MCF 10A (cell line): ENCODE measurements at regions of chr17 and their contacts with region 1.

Region 1: GRCh38 chr17:75779231-75779986 is 5.2 kb upstream of the UNK start:
- DNase-seq: peak; percentile 100
- H3K4me3 Mint-ChIP-seq: peak overlapping the region; percentile 93
- H3K27ac Mint-ChIP-seq: peak overlapping the region; percentile 100
- H3K4me1 Mint-ChIP-seq: peaks cover 18% of the 10 kb centered on the region
- H3K27me3 Mint-ChIP-seq: no peaks in the 10 kb centered on the region
- CTCF ChIP-seq: no peak

Region 2: GRCh38 chr17:75679706-75680442 is 99.5 kb before region 1 on chr17:
- CTCF ChIA-PET with region 1: interaction called, 5 read pairs
- POLR2A ChIA-PET with region 1: interaction called, 31 read pairs
- intact Hi-C with region 1: no loop called
- DNase-seq: peak; percentile 92
- H3K4me3 Mint-ChIP-seq: peak overlapping the region; percentile 60
- H3K27ac Mint-ChIP-seq: peak overlapping the region; percentile 91
- H3K4me1 Mint-ChIP-seq: peaks cover 40% of the 10 kb centered on the region
- H3K27me3 Mint-ChIP-seq: no peaks in the 10 kb centered on the region
- CTCF ChIP-seq: peak; percentile 60

Region 3: GRCh38 chr17:75720725-75721462 is 58.5 kb before region 1 on chr17 and contains the start of gene ITGB4:
- CTCF ChIA-PET with region 1: no interaction called
- POLR2A ChIA-PET with region 1: interaction called, 24 read pairs
- intact Hi-C with region 1: no loop called
- DNase-seq: peak; percentile 85
- H3K4me3 Mint-ChIP-seq: peak within 1 kb of the TSS; percentile 87
- H3K27ac Mint-ChIP-seq: peak within 1 kb of the TSS; percentile 78
- H3K4me1 Mint-ChIP-seq: peaks cover 6% of the 10 kb centered on the region
- H3K27me3 Mint-ChIP-seq: no peaks in the 10 kb centered on the region
- CTCF ChIP-seq: no peak
- total RNA-seq, gene ITGB4: 727 and 1,054 TPM in 2 replicates

Region 4: GRCh38 chr17:75814900-75815373 is 35.5 kb after region 1 on chr17:
- CTCF ChIA-PET with region 1: no interaction called
- POLR2A ChIA-PET with region 1: interaction called, 38 read pairs
- intact Hi-C with region 1: loop called (anchors 5 kb)
- DNase-seq: peak; percentile 81
- H3K4me3 Mint-ChIP-seq: no peak overlapping the region
- H3K27ac Mint-ChIP-seq: peak overlapping the region; percentile 36
- H3K4me1 Mint-ChIP-seq: peaks cover 11% of the 10 kb centered on the region
- H3K27me3 Mint-ChIP-seq: no peaks in the 10 kb centered on the region
- CTCF ChIP-seq: no peak

Region 5: GRCh38 chr17:75877752-75878173 is 98.4 kb after region 1 on chr17:
- CTCF ChIA-PET with region 1: interaction called, 3 read pairs
- POLR2A ChIA-PET with region 1: interaction called, 91 read pairs
- intact Hi-C with region 1: loop called (anchors 2 kb)
- DNase-seq: peak; percentile 76
- H3K4me3 Mint-ChIP-seq: peak overlapping the region; percentile 86
- H3K27ac Mint-ChIP-seq: peak overlapping the region; percentile 89
- H3K4me1 Mint-ChIP-seq: peaks cover 13% of the 10 kb centered on the region
- H3K27me3 Mint-ChIP-seq: no peaks in the 10 kb centered on the region
- CTCF ChIP-seq: peak; percentile 34